ENCODE measurements at regions of chr12 and their contacts with region 1.

Region 1: GRCh38 chr12:99957866-99958466 is 26.8 kb downstream of the ANKS1B start:
- DNase-seq: no peak
- ATAC-seq: no peak
- H3K4me3 ChIP-seq: no peak overlapping the region
- H3K27ac ChIP-seq: no peak overlapping the region
- H3K4me1 ChIP-seq: no peaks in the 10 kb centered on the region
- H3K27me3 ChIP-seq: peaks cover 3% of the 10 kb centered on the region; the same call in 1 of the 2 replicates
- CTCF ChIP-seq: no peak
- POLR2A ChIP-seq: no peak
- RAD21 ChIP-seq: no peak

Region 2: GRCh38 chr12:98644711-98645402 is 1313.1 kb before region 1 on chr12 and contains the starts of genes APAF1 and IKBIP:
- CTCF ChIA-PET with region 1: no interaction called
- POLR2A ChIA-PET with region 1: interaction called, 12 read pairs
- dilution Hi-C with region 1: no loop called
- in situ Hi-C with region 1: no loop called
- intact Hi-C with region 1: no loop called
- DNase-seq: peak; percentile 94
- ATAC-seq: peak; percentile 96
- H3K4me3 ChIP-seq: peak within 1 kb of the TSS; percentile 67
- H3K27ac ChIP-seq: peak within 1 kb of the TSS; percentile 69
- H3K4me1 ChIP-seq: no peaks in the 10 kb centered on the region; the same call in 1 of the 2 replicates
- H3K27me3 ChIP-seq: no peaks in the 10 kb centered on the region
- CTCF ChIP-seq: no peak
- POLR2A ChIP-seq: peak; percentile 86
- RAD21 ChIP-seq: no peak
- total RNA-seq, gene APAF1: 32.8 and 42.2 TPM in 2 replicates
- total RNA-seq, gene IKBIP: 37.1 and 88.3 TPM in 2 replicates

Region 3: DNA sequence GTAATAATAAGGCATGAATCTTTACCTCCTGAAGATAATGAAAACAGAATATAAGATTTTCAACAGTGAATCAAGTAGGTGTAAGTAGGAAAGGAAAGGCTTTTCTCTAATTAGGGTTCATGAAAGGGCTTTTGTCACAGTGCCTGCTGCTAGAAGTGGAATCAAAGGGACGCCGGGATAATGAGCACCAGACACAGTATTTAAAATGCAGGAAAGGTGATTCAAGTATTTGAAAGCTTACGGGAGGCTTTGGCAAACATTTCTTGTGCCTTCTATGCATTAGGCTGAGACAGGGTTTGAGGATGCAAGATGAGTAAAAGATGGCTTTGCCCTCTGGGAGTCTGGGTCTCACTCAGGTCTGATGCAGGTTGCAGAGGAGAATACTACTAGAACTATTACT is 766.1 kb after region 1 on chr12:
- CTCF ChIA-PET with region 1: no interaction called
- POLR2A ChIA-PET with region 1: no interaction called
- dilution Hi-C with region 1: no loop called
- in situ Hi-C with region 1: no loop called
- intact Hi-C with region 1: no loop called
- DNase-seq: no peak
- ATAC-seq: no peak
- H3K4me3 ChIP-seq: no peak overlapping the region
- H3K27ac ChIP-seq: no peak overlapping the region
- H3K4me1 ChIP-seq: no peaks in the 10 kb centered on the region
- H3K27me3 ChIP-seq: peaks cover 4% of the 10 kb centered on the region
- CTCF ChIP-seq: no peak
- POLR2A ChIP-seq: no peak
- RAD21 ChIP-seq: no peak

Measured in IMR-90 (cell line).